Naive thymus-derived CD4-positive, alpha-beta T cell (primary cell): ENCODE measurements at regions of chr9 and their contacts with region 1.

Region 1: GRCh38 chr9:20579524-20580314 is 42.6 kb downstream of the MLLT3 start:
- DNase-seq: no peak
- ATAC-seq: no peak
- H3K4me3 ChIP-seq: no peak overlapping the region
- H3K4me3 Mint-ChIP-seq: peak overlapping the region in 7 of 10 donors; percentile 19 to 48 (median 32)
- H3K27ac ChIP-seq: no peak overlapping the region
- H3K27ac Mint-ChIP-seq: peak overlapping the region in 5 of 9 donors; percentile 7 to 55 (median 16)
- H3K4me1 ChIP-seq: peaks cover 0 to 18% of the 10 kb centered on the region in 2 donors
- H3K4me1 Mint-ChIP-seq: peaks cover 40 to 86% (median 76%) of the 10 kb centered on the region in 7 donors
- H3K27me3 ChIP-seq: no peaks in the 10 kb centered on the region
- H3K27me3 Mint-ChIP-seq: no peaks in the 10 kb centered on the region

Region 2: DNA sequence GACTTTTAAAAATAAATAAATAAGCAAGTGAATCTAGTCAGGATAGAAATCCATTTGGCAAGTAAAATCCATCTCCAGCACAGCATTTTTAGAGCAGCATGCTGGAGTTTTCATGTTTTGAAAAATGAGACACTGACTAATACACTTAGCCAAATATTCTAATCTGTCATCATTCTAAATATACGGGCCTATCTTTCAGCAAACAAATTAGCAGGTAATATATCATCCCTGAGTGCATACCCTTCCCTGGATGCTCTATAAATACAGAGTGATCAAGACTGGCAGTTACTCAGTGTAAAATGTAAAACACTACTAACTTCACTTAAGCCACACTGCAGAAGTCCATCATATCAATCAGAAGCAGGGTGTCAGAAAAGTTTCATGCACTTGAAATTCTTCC is 15.8 kb before region 1 on chr9:
- CTCF ChIA-PET with region 1: interaction called, 4 read pairs
- POLR2A ChIA-PET with region 1: no interaction called
- intact Hi-C with region 1: loop called in 1 of 2 experiments (anchors 2 kb)
- DNase-seq: no peak
- ATAC-seq: no peak
- H3K4me3 ChIP-seq: no peak overlapping the region
- H3K4me3 Mint-ChIP-seq: peak overlapping the region in 2 of 10 donors; percentile 14 to 31
- H3K27ac ChIP-seq: no peak overlapping the region
- H3K27ac Mint-ChIP-seq: peak overlapping the region in 4 of 9 donors; percentile 4 to 32 (median 16)
- H3K4me1 ChIP-seq: peaks cover 11 to 37% of the 10 kb centered on the region in 2 donors
- H3K4me1 Mint-ChIP-seq: peaks cover 48 to 98% (median 96%) of the 10 kb centered on the region in 7 donors
- H3K27me3 ChIP-seq: no peaks in the 10 kb centered on the region
- H3K27me3 Mint-ChIP-seq: no peaks in the 10 kb centered on the region

Region 3: DNA sequence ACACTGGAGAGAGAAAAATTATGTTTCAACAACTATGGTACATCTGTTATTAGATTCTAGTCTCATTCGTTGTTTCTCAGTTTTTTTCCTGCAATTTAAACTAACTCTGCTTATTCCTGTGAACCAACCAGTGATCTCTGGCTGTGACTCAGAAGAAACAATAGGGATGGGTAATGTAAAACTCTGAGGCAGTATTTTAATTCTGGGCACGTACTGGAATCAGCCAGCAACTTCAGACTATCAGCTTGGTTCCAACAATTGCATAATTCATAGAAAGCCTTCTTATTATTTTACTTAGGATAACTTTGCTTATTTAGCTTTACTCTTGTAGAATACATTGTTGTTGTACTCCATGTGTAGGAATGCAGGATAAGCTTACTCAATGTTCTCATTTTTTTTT is 13.8 kb after region 1 on chr9:
- CTCF ChIA-PET with region 1: no interaction called
- POLR2A ChIA-PET with region 1: no interaction called
- intact Hi-C with region 1: loop called (anchors 1 to 2 kb)
- DNase-seq: no peak
- ATAC-seq: no peak
- H3K4me3 ChIP-seq: no peak overlapping the region
- H3K4me3 Mint-ChIP-seq: no peak overlapping the region
- H3K27ac ChIP-seq: no peak overlapping the region
- H3K27ac Mint-ChIP-seq: peak overlapping the region in 2 of 9 donors; percentile 38 to 51
- H3K4me1 ChIP-seq: peaks cover 4 to 8% of the 10 kb centered on the region in 2 donors
- H3K4me1 Mint-ChIP-seq: peaks cover 39 to 80% (median 72%) of the 10 kb centered on the region in 7 donors
- H3K27me3 ChIP-seq: no peaks in the 10 kb centered on the region
- H3K27me3 Mint-ChIP-seq: no peaks in the 10 kb centered on the region

Region 4: DNA sequence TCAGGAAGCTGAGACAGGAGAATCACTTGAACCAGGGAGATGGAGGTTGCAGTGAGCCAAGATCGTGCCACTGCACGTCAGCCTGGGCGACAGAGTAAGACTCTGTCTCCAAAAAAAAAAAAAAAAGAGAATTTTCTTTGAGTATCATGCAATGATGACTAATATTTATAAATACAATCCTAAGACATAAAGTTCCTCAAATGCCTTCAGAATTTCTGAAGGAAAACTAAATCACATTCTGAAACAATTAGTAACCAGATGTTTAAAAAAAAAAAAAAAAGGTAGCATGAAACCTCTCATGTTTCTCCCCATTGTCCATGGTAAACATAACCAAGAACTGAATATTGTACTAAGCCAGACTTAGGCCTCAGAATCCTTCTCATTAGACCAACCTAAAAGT is 19.5 kb after region 1 on chr9:
- CTCF ChIA-PET with region 1: no interaction called
- POLR2A ChIA-PET with region 1: no interaction called
- intact Hi-C with region 1: loop called (anchors 2 kb)
- DNase-seq: no peak
- ATAC-seq: no peak
- H3K4me3 ChIP-seq: no peak overlapping the region
- H3K4me3 Mint-ChIP-seq: peak overlapping the region in 3 of 10 donors; percentile 12 to 44 (median 33)
- H3K27ac ChIP-seq: no peak overlapping the region
- H3K27ac Mint-ChIP-seq: peak overlapping the region in 1 of 9 donors; percentile 52
- H3K4me1 ChIP-seq: peaks cover 4 to 26% of the 10 kb centered on the region in 2 donors
- H3K4me1 Mint-ChIP-seq: peaks cover 49 to 94% (median 86%) of the 10 kb centered on the region in 7 donors
- H3K27me3 ChIP-seq: no peaks in the 10 kb centered on the region
- H3K27me3 Mint-ChIP-seq: no peaks in the 10 kb centered on the region